Adrenal gland (tissue), 19 donors: ENCODE measurements at regions of chr15 and their contacts with region 1.

Region 1: GRCh38 chr15:75684642-75685041 is 28.0 kb downstream of the CSPG4 start:
- DNase-seq: no peak
- H3K4me3 ChIP-seq: no peak overlapping the region
- H3K27ac ChIP-seq: no peak overlapping the region
- H3K4me1 ChIP-seq: no peaks in the 10 kb centered on the region
- H3K27me3 ChIP-seq: no peaks in the 10 kb centered on the region
- CTCF ChIP-seq: no peak
- POLR2A ChIP-seq: no peak

Region 2: GRCh38 chr15:75732809-75733451 is 48.3 kb after region 1 on chr15:
- intact Hi-C with region 1: loop called in 1 of 2 experiments (anchors 2 kb)
- DNase-seq: peak; percentile 59 to 88 (median 77)
- H3K4me3 ChIP-seq: no peak overlapping the region
- H3K27ac ChIP-seq: peak overlapping the region in 1 of 5 donors; percentile 47
- H3K4me1 ChIP-seq: peaks cover 0 to 19% of the 10 kb centered on the region in 2 donors
- H3K27me3 ChIP-seq: no peaks in the 10 kb centered on the region
- CTCF ChIP-seq: peak; percentile 76 to 92 (median 87)
- POLR2A ChIP-seq: no peak